ENCODE measurements at regions of chr5 and their contacts with region 1.

Region 1: DNA sequence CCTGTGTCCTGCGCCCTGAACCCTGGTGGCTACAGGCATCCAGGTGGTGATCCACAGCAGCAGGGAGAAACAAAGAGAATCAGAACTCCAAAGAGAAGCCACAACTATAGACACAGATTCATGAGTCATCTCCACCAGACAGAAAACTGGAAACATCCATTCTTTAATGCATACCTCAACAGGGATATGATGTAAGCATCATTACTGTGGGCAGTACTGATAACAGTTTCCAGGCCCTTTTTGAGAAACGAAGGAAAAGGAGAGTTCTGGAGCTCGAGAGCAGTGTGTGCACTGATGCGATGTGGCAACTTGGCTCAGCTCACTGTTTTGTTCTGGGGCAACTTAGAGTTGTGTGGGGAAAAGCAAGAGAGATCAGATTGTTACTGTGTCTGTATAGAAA is 215.6 kb upstream of the ADAMTS16 start:
- DNase-seq: no peak
- H3K4me3 ChIP-seq: no peak overlapping the region
- H3K27ac ChIP-seq: no peak overlapping the region
- H3K4me1 ChIP-seq: no peaks in the 10 kb centered on the region
- H3K27me3 ChIP-seq: no peaks in the 10 kb centered on the region
- CTCF ChIP-seq: no peak

Region 2: GRCh38 chr5:4879693-4880303 is 44.8 kb before region 1 on chr5:
- CTCF ChIA-PET with region 1: no interaction called
- dilution Hi-C with region 1: loop called (anchors 5 kb)
- in situ Hi-C with region 1: no loop called
- intact Hi-C with region 1: no loop called
- DNase-seq: peak; percentile 43
- H3K4me3 ChIP-seq: no peak overlapping the region
- H3K27ac ChIP-seq: no peak overlapping the region
- H3K4me1 ChIP-seq: no peaks in the 10 kb centered on the region
- H3K27me3 ChIP-seq: no peaks in the 10 kb centered on the region
- CTCF ChIP-seq: peak; percentile 96 to 98